ENCODE measurements at regions of chr16 and their contacts with region 1.

Region 1: GRCh38 chr16:12228602-12229499 is 252.3 kb downstream of the SNX29 start:
- DNase-seq: peak; percentile 70
- ATAC-seq: peak; percentile 93
- H3K4me3 ChIP-seq: peak overlapping the region in 2 of 3 experiments; percentile 1 to 44; a peak in 2 of 6 replicates
- H3K27ac ChIP-seq: no peak overlapping the region
- H3K4me1 ChIP-seq: peaks cover 56% of the 10 kb centered on the region
- H3K27me3 ChIP-seq: no peaks in the 10 kb centered on the region
- CTCF ChIP-seq: peak; percentile 98
- EP300 ChIP-seq: no peak
- POLR2A ChIP-seq: no peak
- RAD21 ChIP-seq: peak; percentile 94

Region 2: GRCh38 chr16:12203780-12204351 is 25.0 kb before region 1 on chr16:
- CTCF ChIA-PET with region 1: no interaction called
- POLR2A ChIA-PET with region 1: no interaction called
- in situ Hi-C with region 1: no loop called
- intact Hi-C with region 1: no loop called
- DNase-seq: peak; percentile 39
- ATAC-seq: peak; percentile 90
- H3K4me3 ChIP-seq: peak overlapping the region in 1 of 3 experiments; percentile 42; a peak in 1 of 6 replicates
- H3K27ac ChIP-seq: peak overlapping the region; percentile 4
- H3K4me1 ChIP-seq: peaks cover 47% of the 10 kb centered on the region
- H3K27me3 ChIP-seq: no peaks in the 10 kb centered on the region
- CTCF ChIP-seq: no peak
- EP300 ChIP-seq: no peak
- POLR2A ChIP-seq: no peak
- RAD21 ChIP-seq: no peak

Region 3: DNA sequence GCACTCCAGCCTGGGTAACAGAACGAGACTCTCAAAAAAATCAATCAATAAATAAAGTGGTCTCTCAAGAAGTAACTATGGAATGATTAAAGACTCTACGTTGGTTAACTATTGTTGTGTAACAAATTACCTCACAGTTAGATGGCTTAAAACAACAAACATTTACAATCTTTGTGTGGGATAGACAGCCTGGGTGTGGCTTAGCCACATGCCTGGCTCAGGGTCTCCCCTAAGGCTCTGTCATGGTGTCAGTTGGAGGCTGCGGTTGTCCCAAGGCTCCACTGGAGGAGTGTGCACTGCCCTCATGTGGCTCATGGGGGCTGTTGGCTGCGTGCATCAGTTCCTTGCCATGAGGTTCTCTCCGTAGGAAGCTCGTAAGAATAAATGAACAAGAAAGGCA is 42.2 kb after region 1 on chr16:
- CTCF ChIA-PET with region 1: interaction called, 3 read pairs
- POLR2A ChIA-PET with region 1: no interaction called
- in situ Hi-C with region 1: no loop called
- intact Hi-C with region 1: loop called (anchors 1 kb)
- DNase-seq: peak; percentile 52
- ATAC-seq: peak; percentile 91
- H3K4me3 ChIP-seq: no peak overlapping the region
- H3K27ac ChIP-seq: no peak overlapping the region
- H3K4me1 ChIP-seq: peaks cover 18% of the 10 kb centered on the region
- H3K27me3 ChIP-seq: no peaks in the 10 kb centered on the region
- CTCF ChIP-seq: peak; percentile 71
- EP300 ChIP-seq: no peak
- POLR2A ChIP-seq: no peak
- RAD21 ChIP-seq: peak; percentile 81

Region 4: GRCh38 chr16:12500771-12501170 is 271.9 kb after region 1 on chr16:
- CTCF ChIA-PET with region 1: no interaction called
- POLR2A ChIA-PET with region 1: no interaction called
- in situ Hi-C with region 1: no loop called
- intact Hi-C with region 1: loop called (anchors 5 kb)
- DNase-seq: no peak
- ATAC-seq: no peak
- H3K4me3 ChIP-seq: no peak overlapping the region
- H3K27ac ChIP-seq: no peak overlapping the region
- H3K4me1 ChIP-seq: no peaks in the 10 kb centered on the region
- H3K27me3 ChIP-seq: no peaks in the 10 kb centered on the region
- CTCF ChIP-seq: no peak
- EP300 ChIP-seq: no peak
- POLR2A ChIP-seq: no peak
- RAD21 ChIP-seq: no peak

Measured in HepG2 (cell line).